Naive thymus-derived CD8-positive, alpha-beta T cell (primary cell): ENCODE measurements at regions of chr16 and their contacts with region 1.

Region 1: GRCh38 chr16:53503270-53503923 is 388 bp upstream of the AKTIP start:
- DNase-seq: peak; percentile 97 to 100 (median 100)
- ATAC-seq: peak; percentile 86 to 88
- H3K4me3 Mint-ChIP-seq: peak overlapping the region; percentile 87 to 98 (median 94)
- H3K27ac Mint-ChIP-seq: peak overlapping the region; percentile 87 to 97 (median 94)
- H3K4me1 Mint-ChIP-seq: peaks cover 20 to 59% (median 51%) of the 10 kb centered on the region in 4 donors
- H3K27me3 Mint-ChIP-seq: no peaks in the 10 kb centered on the region

Region 2: GRCh38 chr16:53372992-53373871 is 130.2 kb before region 1 on chr16:
- POLR2A ChIA-PET with region 1: interaction called, 23 read pairs
- DNase-seq: peak; percentile 64 to 90 (median 82)
- ATAC-seq: peak; percentile 93 to 94
- H3K4me3 Mint-ChIP-seq: no peak overlapping the region
- H3K27ac Mint-ChIP-seq: peak overlapping the region in 5 of 10 donors; percentile 72 to 92 (median 79)
- H3K4me1 Mint-ChIP-seq: peaks cover 12 to 36% (median 29%) of the 10 kb centered on the region in 4 donors
- H3K27me3 Mint-ChIP-seq: peaks cover 0 to 13% (median 0%) of the 10 kb centered on the region in 5 donors

Region 3: DNA sequence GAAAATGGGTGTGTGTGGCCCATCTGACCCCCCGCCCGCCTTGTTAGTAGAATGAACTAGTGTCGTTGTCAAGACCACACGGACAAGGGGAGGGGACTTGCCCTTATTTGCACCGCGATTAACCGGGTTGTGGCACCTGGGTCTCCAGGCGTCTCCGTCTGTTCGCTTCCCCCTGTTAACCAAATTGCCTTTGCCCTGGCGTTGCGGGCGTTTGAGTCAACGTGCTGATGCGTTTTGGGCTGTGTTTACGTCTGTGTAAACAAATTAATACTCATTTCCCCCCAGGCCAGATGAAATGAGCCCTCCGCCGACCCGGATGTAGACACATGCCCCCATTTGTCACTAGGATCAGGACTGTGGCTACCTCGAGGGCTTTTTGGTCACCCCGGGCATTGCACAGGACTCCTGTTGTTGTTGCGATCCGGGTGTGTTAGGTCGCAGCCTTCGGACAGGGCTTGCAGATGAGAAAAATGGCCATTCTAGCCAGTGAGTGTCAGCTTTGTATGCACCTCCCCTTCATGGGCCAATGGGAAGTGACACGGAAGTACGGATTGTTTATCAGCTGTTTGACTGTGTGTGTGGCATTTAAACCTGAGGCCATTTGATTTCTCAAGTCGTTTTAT is 68.2 kb before region 1 on chr16:
- POLR2A ChIA-PET with region 1: interaction called, 316 read pairs
- DNase-seq: peak; percentile 36 to 83 (median 67)
- ATAC-seq: peak; percentile 64 to 65
- H3K4me3 Mint-ChIP-seq: peak overlapping the region; percentile 92 to 99 (median 98)
- H3K27ac Mint-ChIP-seq: peak overlapping the region; percentile 95 to 99 (median 98)
- H3K4me1 Mint-ChIP-seq: peaks cover 12 to 50% (median 31%) of the 10 kb centered on the region in 4 donors
- H3K27me3 Mint-ChIP-seq: no peaks in the 10 kb centered on the region

Region 4: DNA sequence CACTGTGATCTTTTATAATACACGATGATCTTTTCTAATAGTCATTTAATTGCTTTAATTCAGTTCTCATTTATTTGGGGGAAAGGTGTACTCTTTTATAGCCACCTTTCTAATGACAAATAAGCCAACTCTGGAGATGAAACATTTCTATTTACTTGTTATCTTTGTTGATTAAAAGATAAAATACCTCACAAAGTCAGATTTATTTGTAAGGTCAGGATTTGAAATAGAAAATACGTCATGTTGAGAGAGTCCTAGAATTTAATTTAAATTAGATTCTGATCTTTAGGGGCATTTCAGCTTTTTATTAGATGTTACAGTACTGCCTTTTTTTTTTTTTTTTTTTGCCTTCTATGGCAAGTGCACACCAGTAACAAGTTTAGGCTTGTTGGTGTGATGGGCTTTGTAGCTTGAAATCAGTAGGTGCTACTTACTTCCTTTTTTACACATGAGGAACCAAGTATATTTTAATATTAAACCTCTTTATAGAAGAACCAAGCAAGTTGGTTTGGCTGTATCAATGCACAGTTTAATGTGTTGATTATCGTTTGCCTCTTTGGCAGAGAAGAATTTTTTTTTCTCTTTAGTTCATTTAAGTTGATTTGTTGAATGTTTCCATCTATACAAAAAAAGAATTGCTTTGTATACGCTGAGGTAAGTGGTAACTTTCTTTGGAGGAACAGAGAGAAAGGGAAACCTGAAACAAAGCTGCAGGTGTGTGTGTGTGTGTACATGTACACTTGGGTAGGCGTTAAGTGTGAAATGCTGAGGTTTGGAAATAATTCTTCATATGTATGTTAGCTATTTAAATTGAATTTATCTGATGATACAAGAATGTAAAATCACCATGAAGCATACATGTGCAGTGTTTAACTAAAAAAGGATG is 53.5 kb before region 1 on chr16:
- POLR2A ChIA-PET with region 1: interaction called, 152 read pairs
- DNase-seq: no peak
- ATAC-seq: peak; percentile 46 to 50
- H3K4me3 Mint-ChIP-seq: peak overlapping the region; percentile 79 to 95 (median 84)
- H3K27ac Mint-ChIP-seq: peak overlapping the region; percentile 73 to 97 (median 90)
- H3K4me1 Mint-ChIP-seq: peaks cover 24 to 78% (median 54%) of the 10 kb centered on the region in 4 donors
- H3K27me3 Mint-ChIP-seq: no peaks in the 10 kb centered on the region

Region 5: GRCh38 chr16:53489755-53490154 is 13.6 kb before region 1 on chr16:
- POLR2A ChIA-PET with region 1: interaction called, 25 read pairs
- DNase-seq: no peak
- ATAC-seq: no peak
- H3K4me3 Mint-ChIP-seq: peak overlapping the region in 6 of 10 donors; percentile 3 to 58 (median 30)
- H3K27ac Mint-ChIP-seq: peak overlapping the region; percentile 14 to 95 (median 83)
- H3K4me1 Mint-ChIP-seq: peaks cover 24 to 58% (median 46%) of the 10 kb centered on the region in 4 donors
- H3K27me3 Mint-ChIP-seq: no peaks in the 10 kb centered on the region

Region 6: GRCh38 chr16:53518550-53519416 is 15.4 kb after region 1 on chr16:
- POLR2A ChIA-PET with region 1: interaction called, 13 read pairs
- DNase-seq: peak; percentile 28 to 89 (median 78)
- ATAC-seq: peak; percentile 87 to 96
- H3K4me3 Mint-ChIP-seq: peak overlapping the region; percentile 68 to 87 (median 77)
- H3K27ac Mint-ChIP-seq: peak overlapping the region; percentile 51 to 93 (median 84)
- H3K4me1 Mint-ChIP-seq: peaks cover 29 to 59% (median 56%) of the 10 kb centered on the region in 4 donors
- H3K27me3 Mint-ChIP-seq: peaks cover 5 to 61% (median 16%) of the 10 kb centered on the region in 5 donors